ENCODE measurements at regions of chr11 and their contacts with region 1.

Region 1: DNA sequence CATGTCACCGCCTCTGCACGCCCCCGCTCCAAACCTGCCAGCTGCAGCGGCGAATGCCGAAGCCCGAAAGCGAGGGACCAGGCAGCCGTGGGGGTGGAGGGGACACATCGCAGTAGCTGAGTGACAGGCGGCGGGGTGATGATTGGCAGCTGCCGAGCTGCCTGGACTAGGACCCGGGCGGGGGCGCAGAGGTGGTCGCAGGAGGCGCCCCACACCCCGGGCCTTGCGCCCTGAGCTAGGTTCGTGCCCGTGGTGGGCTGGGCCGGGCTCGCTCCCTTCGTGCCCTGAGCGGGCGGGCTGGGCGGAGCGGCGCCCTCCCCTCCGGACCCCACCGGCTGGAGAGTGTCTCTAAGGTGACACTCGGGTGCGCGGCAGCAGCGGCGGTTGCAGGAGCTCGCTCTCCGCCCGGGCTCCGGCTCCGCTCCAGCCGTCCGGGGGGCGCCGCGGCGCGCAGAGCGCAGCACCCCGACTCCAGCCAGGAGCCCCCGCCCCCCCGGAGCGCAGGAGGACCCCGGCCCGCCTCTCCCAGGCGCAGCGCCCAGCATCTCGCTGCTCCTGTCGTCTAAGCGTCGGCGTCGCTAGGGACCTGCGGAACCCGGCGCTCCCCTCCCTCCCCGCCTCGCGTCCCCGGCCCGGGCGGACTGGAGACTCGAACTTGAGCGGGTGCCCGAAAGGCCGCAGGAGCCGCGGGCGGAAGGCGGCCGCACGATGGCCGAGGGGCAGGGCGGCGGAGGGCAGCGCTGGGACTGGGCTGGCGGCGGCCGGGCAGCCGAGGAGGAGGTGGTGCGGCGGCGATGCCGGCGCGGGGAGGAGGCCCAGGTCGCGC is 14.5 kb upstream of the DGKZ start:
- DNase-seq: no peak
- H3K4me3 Mint-ChIP-seq: peak overlapping the region; percentile 48
- H3K27ac Mint-ChIP-seq: no peak overlapping the region
- H3K4me1 Mint-ChIP-seq: peaks cover 68% of the 10 kb centered on the region
- H3K27me3 Mint-ChIP-seq: peaks cover 33% of the 10 kb centered on the region

Region 2: GRCh38 chr11:46197421-46197820 is 135.4 kb before region 1 on chr11:
- CTCF ChIA-PET with region 1: no interaction called
- POLR2A ChIA-PET with region 1: no interaction called
- DNase-seq: no peak
- H3K4me3 Mint-ChIP-seq: no peak overlapping the region
- H3K27ac Mint-ChIP-seq: no peak overlapping the region
- H3K4me1 Mint-ChIP-seq: no peaks in the 10 kb centered on the region
- H3K27me3 Mint-ChIP-seq: peaks cover 23% of the 10 kb centered on the region

Region 3: DNA sequence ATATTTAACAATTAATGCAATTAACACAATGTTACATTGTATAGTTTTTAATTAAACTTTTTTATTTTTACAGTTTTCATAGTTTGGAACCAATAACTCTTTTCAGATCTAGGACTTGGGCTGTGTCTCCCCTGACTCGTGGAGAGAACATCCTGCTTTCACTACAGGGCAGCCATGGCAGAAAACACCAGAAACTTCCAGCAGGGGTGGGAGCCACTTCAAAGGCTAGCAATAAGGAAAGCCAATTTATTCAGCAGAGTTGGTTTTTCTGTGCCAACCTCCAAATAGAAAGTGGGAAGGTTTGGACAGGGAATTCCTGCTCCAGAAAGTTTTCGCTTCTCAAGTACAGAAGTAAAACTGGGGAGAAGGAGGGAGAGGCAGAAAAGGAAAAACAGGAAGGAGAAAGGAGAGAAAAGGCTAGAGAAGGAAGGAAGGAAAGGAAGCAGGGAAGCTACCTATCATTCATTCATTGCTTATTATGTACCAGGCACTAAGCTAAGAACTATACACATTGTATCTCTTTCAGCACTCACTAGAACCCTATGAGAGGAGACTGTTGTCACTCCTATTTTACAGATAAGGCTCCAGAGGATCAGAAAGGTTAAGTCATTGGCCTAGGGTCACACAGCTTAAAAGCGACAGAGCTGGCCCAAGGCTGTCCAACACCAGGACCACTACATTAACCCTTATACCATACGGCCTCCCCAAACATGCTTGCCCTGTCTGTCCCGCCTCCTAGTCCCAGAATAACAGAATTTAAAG is 110.1 kb before region 1 on chr11:
- CTCF ChIA-PET with region 1: no interaction called
- POLR2A ChIA-PET with region 1: no interaction called
- DNase-seq: no peak
- H3K4me3 Mint-ChIP-seq: no peak overlapping the region
- H3K27ac Mint-ChIP-seq: no peak overlapping the region
- H3K4me1 Mint-ChIP-seq: no peaks in the 10 kb centered on the region
- H3K27me3 Mint-ChIP-seq: peaks cover 19% of the 10 kb centered on the region

Region 4: GRCh38 chr11:46321757-46322156 is 11.0 kb before region 1 on chr11:
- CTCF ChIA-PET with region 1: interaction called, 10 read pairs
- POLR2A ChIA-PET with region 1: no interaction called
- DNase-seq: no peak
- H3K4me3 Mint-ChIP-seq: no peak overlapping the region
- H3K27ac Mint-ChIP-seq: peak overlapping the region; percentile 19
- H3K4me1 Mint-ChIP-seq: peaks cover 33% of the 10 kb centered on the region
- H3K27me3 Mint-ChIP-seq: peaks cover 3% of the 10 kb centered on the region

Region 5: DNA sequence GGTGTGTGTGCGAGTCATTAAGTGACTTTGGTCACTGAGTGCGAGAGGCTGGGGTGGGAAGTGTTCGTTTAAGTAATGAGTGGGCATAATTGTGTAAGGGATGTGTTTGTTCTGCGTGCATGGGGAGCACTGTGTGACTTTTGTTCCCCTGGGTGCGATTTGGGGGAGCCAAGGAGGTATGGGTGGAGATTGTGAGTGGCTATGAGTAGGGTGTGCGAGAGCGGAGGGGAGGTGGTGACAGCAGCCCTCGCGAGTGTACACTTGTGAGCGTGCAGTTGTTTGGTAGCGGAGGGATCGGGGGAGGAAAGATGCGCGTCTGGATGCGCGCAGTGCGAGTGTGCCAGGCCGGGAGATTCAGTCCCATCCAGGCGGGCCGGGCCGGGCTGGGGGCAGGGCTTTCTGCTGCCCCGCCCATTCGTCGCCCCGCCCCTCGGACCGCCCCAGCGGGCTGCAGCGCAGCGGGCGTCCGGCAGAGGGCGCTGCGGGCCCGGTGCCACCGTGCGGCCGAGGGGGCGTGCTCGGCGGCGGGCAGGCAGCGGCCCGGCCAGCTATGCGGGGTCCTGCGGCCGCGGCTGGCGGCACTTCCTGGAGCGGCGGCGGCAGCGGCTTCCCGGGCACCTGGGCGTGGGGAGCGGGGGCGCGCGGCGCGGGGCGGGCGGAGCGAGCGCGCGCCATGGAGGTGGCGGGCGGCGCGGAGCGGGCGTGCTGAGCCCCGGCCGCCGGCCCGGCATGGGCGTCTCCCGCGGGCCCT is 14.3 kb after region 1 on chr11 and contains the start of gene DGKZ:
- CTCF ChIA-PET with region 1: interaction called, 29 read pairs
- POLR2A ChIA-PET with region 1: no interaction called
- DNase-seq: peak; percentile 84
- H3K4me3 Mint-ChIP-seq: peak within 1 kb of the TSS; percentile 85
- H3K27ac Mint-ChIP-seq: peak within 1 kb of the TSS; percentile 91
- H3K4me1 Mint-ChIP-seq: peaks cover 80% of the 10 kb centered on the region
- H3K27me3 Mint-ChIP-seq: peaks cover 2% of the 10 kb centered on the region
- total RNA-seq, gene DGKZ: 178 to 187 TPM

Region 6: GRCh38 chr11:46352063-46352841 is 19.5 kb after region 1 on chr11:
- CTCF ChIA-PET with region 1: interaction called, 29 read pairs
- POLR2A ChIA-PET with region 1: interaction called, 12 read pairs
- DNase-seq: peak; percentile 73
- H3K4me3 Mint-ChIP-seq: peak overlapping the region; percentile 72
- H3K27ac Mint-ChIP-seq: peak overlapping the region; percentile 86
- H3K4me1 Mint-ChIP-seq: peaks cover 66% of the 10 kb centered on the region
- H3K27me3 Mint-ChIP-seq: no peaks in the 10 kb centered on the region

Region 7: GRCh38 chr11:46427364-46427763 is 94.6 kb after region 1 on chr11:
- CTCF ChIA-PET with region 1: no interaction called
- POLR2A ChIA-PET with region 1: no interaction called
- DNase-seq: no peak
- H3K4me3 Mint-ChIP-seq: no peak overlapping the region
- H3K27ac Mint-ChIP-seq: no peak overlapping the region
- H3K4me1 Mint-ChIP-seq: peaks cover 1% of the 10 kb centered on the region
- H3K27me3 Mint-ChIP-seq: no peaks in the 10 kb centered on the region